MCF 10A (cell line): ENCODE measurements at regions of chr11 and their contacts with region 1.

Region 1: DNA sequence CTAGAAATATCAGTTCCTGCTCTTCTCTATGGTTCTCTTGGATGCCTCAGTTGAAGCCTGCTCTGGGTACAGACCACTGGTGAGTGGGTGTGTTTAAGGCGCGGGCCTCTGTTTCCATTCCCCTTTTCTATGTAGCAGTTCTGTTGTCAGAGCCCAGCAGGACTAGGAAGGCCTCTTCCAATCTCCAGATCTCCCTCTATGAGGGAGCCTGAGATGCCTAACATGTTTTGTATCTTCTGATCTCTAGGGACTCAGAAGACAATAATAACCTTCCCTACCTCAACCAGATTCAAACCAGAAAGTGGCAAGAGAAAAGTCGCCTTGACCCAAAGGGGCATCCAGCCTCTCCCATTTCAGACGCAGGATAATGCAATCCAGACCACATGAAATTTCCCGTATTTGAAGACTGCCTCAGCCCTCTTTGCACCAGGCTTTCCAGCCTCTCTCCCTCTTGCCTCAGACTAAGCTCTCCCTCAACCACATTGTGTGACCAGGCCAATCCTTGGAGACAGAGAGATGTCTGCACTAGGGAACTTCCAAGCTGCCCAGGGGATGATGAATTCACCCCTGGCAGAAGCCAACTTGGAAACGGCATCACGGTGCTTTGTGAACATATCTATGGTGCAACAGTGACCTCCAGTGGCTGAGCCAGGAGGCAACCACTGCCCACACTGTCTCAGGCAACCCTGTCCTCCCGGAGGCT is 150.1 kb upstream of the UBASH3B start:
- DNase-seq: peak; percentile 81
- H3K4me3 Mint-ChIP-seq: no peak overlapping the region
- H3K27ac Mint-ChIP-seq: no peak overlapping the region
- H3K4me1 Mint-ChIP-seq: peaks cover 6% of the 10 kb centered on the region
- H3K27me3 Mint-ChIP-seq: peaks cover 25% of the 10 kb centered on the region
- CTCF ChIP-seq: peak; percentile 93

Region 2: GRCh38 chr11:121591405-121592033 is 913.9 kb before region 1 on chr11:
- CTCF ChIA-PET with region 1: interaction called, 3 read pairs
- POLR2A ChIA-PET with region 1: interaction called, 4 read pairs
- intact Hi-C with region 1: loop called (anchors 1 kb)
- DNase-seq: peak; percentile 80
- H3K4me3 Mint-ChIP-seq: no peak overlapping the region
- H3K27ac Mint-ChIP-seq: no peak overlapping the region
- H3K4me1 Mint-ChIP-seq: peaks cover 24% of the 10 kb centered on the region
- H3K27me3 Mint-ChIP-seq: no peaks in the 10 kb centered on the region
- CTCF ChIP-seq: peak; percentile 86

Region 3: DNA sequence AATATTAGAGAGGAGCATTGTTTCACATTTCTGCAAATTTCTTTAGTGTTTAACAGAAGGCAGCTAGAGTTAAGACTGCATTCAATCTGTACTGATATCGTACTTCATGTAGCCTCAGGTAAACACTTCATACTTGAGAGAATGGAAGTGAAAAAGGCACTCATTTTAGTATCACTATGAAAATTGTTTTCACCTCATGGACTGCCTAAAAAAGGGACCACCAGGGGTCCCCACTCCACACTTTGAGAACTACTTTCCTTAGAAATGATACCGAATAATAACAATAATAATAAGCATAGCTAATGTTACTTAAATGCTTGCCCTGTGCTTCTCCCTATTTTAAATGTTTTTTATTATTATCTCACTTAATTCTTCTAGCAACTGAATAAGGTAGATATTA is 484.6 kb before region 1 on chr11:
- CTCF ChIA-PET with region 1: interaction called, 5 read pairs
- POLR2A ChIA-PET with region 1: no interaction called
- intact Hi-C with region 1: loop called (anchors 5 kb)
- DNase-seq: peak; percentile 16
- H3K4me3 Mint-ChIP-seq: no peak overlapping the region
- H3K27ac Mint-ChIP-seq: no peak overlapping the region
- H3K4me1 Mint-ChIP-seq: peaks cover under 1% of the 10 kb centered on the region
- H3K27me3 Mint-ChIP-seq: no peaks in the 10 kb centered on the region
- CTCF ChIP-seq: no peak

Region 4: GRCh38 chr11:122215244-122215992 is 290.0 kb before region 1 on chr11:
- CTCF ChIA-PET with region 1: interaction called, 127 read pairs
- POLR2A ChIA-PET with region 1: interaction called, 7 read pairs
- intact Hi-C with region 1: loop called (anchors 1 kb)
- DNase-seq: peak; percentile 66
- H3K4me3 Mint-ChIP-seq: no peak overlapping the region
- H3K27ac Mint-ChIP-seq: no peak overlapping the region
- H3K4me1 Mint-ChIP-seq: peaks cover 21% of the 10 kb centered on the region
- H3K27me3 Mint-ChIP-seq: no peaks in the 10 kb centered on the region
- CTCF ChIP-seq: peak; percentile 89

Region 5: GRCh38 chr11:122293296-122294023 is 212.0 kb before region 1 on chr11:
- CTCF ChIA-PET with region 1: interaction called, 8 read pairs
- POLR2A ChIA-PET with region 1: no interaction called
- intact Hi-C with region 1: loop called (anchors 1 kb)
- DNase-seq: peak; percentile 5
- H3K4me3 Mint-ChIP-seq: no peak overlapping the region
- H3K27ac Mint-ChIP-seq: no peak overlapping the region
- H3K4me1 Mint-ChIP-seq: no peaks in the 10 kb centered on the region
- H3K27me3 Mint-ChIP-seq: no peaks in the 10 kb centered on the region
- CTCF ChIP-seq: peak; percentile 17

Region 6: GRCh38 chr11:122439911-122440810 is 65.3 kb before region 1 on chr11:
- CTCF ChIA-PET with region 1: no interaction called
- POLR2A ChIA-PET with region 1: no interaction called
- intact Hi-C with region 1: no loop called
- DNase-seq: peak; percentile 13
- H3K4me3 Mint-ChIP-seq: peak overlapping the region; percentile 64
- H3K27ac Mint-ChIP-seq: peak overlapping the region; percentile 64
- H3K4me1 Mint-ChIP-seq: peaks cover 5% of the 10 kb centered on the region
- H3K27me3 Mint-ChIP-seq: no peaks in the 10 kb centered on the region
- CTCF ChIP-seq: no peak

Region 7: GRCh38 chr11:122538060-122538459 is 32.6 kb after region 1 on chr11:
- CTCF ChIA-PET with region 1: no interaction called
- POLR2A ChIA-PET with region 1: no interaction called
- intact Hi-C with region 1: no loop called
- DNase-seq: no peak
- H3K4me3 Mint-ChIP-seq: no peak overlapping the region
- H3K27ac Mint-ChIP-seq: no peak overlapping the region
- H3K4me1 Mint-ChIP-seq: no peaks in the 10 kb centered on the region
- H3K27me3 Mint-ChIP-seq: peaks cover under 1% of the 10 kb centered on the region
- CTCF ChIP-seq: no peak